ENCODE measurements at regions of chr20 and their contacts with region 1.

Region 1: GRCh38 chr20:17682103-17682888 is at the start of gene RRBP1:
- DNase-seq: peak; percentile 97
- ATAC-seq: peak; percentile 96
- H3K4me3 Mint-ChIP-seq: peak within 1 kb of the TSS; percentile 78
- H3K27ac Mint-ChIP-seq: peak within 1 kb of the TSS; percentile 82
- H3K4me1 Mint-ChIP-seq: peaks cover 26% of the 10 kb centered on the region
- H3K27me3 Mint-ChIP-seq: peaks cover 27% of the 10 kb centered on the region
- CTCF ChIP-seq: peak; percentile 94
- total RNA-seq, gene RRBP1: 35.2 to 35.9 TPM

Region 2: DNA sequence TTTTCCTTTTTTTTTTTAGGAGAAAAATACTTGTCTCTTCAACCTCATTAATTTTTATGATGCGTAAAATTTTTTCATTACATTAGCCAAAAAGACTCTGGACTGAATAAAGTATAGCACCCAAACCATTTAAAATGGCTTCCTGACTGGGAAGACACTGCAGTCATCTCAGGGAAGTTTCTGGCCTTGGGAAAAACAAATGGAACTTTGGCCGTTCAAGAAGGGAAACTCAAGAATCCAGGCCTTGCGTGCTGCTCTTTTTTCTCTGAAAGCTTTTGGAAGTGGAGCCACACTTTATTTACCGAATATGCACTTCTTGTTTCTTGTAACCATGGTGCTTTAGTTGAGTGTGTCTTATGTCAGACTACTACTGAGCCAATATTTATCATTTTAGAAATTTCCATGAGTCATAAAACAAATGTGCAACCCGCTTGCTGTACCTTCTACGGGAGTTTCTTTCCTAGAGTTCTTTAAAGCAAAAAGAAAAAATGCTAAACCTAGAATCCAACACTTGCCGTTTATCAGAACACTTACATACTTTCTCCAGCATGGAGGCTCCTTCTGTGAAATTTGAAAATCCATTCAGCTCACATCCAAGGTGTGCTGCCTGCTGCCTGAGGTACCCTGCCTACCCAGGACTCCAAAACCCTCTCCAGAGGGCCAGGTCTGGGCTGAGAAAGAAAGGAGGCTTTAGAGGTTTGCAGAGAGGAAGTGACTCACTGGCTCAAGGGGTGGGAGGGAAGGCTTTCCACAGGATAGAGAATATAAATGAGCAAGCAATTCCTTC is 123.9 kb before region 1 on chr20:
- CTCF ChIA-PET with region 1: no interaction called
- POLR2A ChIA-PET with region 1: no interaction called
- intact Hi-C with region 1: no loop called
- DNase-seq: peak; percentile 39
- ATAC-seq: peak; percentile 79
- H3K4me3 Mint-ChIP-seq: no peak overlapping the region
- H3K27ac Mint-ChIP-seq: peak overlapping the region; percentile 79
- H3K4me1 Mint-ChIP-seq: peaks cover 33% of the 10 kb centered on the region
- H3K27me3 Mint-ChIP-seq: no peaks in the 10 kb centered on the region
- CTCF ChIP-seq: no peak

Region 3: DNA sequence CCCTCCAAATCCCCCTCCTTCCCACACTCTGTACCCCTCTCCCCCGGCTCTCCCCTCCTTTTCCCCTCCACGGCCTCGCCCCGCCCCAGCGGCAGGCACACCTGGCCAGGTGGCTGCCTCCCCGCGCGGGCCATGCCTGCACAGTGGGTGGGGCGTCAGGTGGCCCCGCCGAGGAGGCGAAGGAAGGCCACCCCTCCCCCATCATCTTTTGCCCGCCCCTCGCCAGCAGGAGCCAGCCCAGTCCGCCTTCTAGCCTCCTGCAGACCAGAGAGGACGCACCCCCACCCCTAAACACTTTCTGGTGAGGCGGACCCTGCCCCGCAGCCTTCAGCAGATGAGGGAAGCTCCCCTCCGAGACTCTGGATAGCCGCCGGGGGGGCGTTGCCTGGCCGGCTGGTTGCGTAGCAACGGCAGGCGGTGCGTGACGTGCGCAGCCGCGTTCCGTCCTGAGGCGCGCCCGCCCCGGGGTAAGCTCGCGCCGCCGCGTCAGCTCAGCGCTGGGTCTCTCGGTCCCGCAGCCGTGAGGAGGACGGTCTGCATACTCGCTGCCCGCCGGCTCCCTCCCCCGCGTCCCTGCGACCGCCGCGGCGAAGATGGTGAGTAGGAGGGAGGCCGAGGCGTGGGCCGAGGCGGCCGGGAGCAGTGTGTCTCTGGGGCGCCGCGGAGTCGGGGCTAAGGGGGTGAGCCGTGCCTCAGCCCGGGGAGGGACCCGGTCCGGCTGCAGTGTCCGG is 112.5 kb before region 1 on chr20 and contains the start of gene DSTN:
- CTCF ChIA-PET with region 1: interaction called, 14 read pairs
- POLR2A ChIA-PET with region 1: interaction called, 6 read pairs
- intact Hi-C with region 1: no loop called
- DNase-seq: peak; percentile 87
- ATAC-seq: peak; percentile 90
- H3K4me3 Mint-ChIP-seq: peak within 1 kb of the TSS; percentile 83
- H3K27ac Mint-ChIP-seq: peak within 1 kb of the TSS; percentile 81
- H3K4me1 Mint-ChIP-seq: peaks cover 16% of the 10 kb centered on the region
- H3K27me3 Mint-ChIP-seq: peaks cover 2% of the 10 kb centered on the region
- CTCF ChIP-seq: no peak
- total RNA-seq, gene DSTN: 55.5 to 56.4 TPM

Region 4: DNA sequence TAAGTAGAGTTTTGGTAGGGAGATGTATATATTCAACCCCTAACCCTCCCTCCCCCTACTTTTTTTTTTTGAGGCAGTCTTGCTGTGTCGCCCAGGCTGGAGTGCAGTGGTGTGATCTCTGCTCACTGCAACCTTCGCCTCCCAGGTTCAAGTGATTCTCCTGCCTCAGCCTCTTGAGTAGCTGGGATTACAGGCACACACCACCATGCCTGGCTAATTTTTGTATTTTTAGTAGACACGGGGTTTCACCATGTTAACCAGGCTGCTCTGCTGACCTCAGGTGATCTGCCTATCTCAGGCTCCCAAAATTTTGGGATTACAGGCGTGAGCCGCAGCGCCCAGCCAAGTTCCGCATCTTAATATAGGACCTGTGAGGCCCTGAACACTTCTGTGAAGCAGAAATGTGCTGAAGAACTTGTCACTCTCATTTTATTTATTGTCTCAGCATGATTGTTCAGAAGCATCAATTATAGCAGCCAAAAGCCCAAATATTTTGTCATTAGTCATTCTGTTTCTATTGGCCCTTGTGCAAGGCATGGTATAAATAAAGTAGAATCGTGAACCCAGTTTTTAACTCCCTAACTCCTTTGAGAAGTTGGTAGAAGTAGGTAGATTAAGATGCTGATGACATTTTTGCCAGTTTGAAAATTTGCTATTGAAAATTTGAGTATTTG is 93.0 kb before region 1 on chr20:
- CTCF ChIA-PET with region 1: no interaction called
- POLR2A ChIA-PET with region 1: no interaction called
- intact Hi-C with region 1: no loop called
- DNase-seq: no peak
- ATAC-seq: no peak
- H3K4me3 Mint-ChIP-seq: no peak overlapping the region
- H3K27ac Mint-ChIP-seq: no peak overlapping the region
- H3K4me1 Mint-ChIP-seq: peaks cover 19% of the 10 kb centered on the region
- H3K27me3 Mint-ChIP-seq: no peaks in the 10 kb centered on the region
- CTCF ChIP-seq: no peak

Region 5: DNA sequence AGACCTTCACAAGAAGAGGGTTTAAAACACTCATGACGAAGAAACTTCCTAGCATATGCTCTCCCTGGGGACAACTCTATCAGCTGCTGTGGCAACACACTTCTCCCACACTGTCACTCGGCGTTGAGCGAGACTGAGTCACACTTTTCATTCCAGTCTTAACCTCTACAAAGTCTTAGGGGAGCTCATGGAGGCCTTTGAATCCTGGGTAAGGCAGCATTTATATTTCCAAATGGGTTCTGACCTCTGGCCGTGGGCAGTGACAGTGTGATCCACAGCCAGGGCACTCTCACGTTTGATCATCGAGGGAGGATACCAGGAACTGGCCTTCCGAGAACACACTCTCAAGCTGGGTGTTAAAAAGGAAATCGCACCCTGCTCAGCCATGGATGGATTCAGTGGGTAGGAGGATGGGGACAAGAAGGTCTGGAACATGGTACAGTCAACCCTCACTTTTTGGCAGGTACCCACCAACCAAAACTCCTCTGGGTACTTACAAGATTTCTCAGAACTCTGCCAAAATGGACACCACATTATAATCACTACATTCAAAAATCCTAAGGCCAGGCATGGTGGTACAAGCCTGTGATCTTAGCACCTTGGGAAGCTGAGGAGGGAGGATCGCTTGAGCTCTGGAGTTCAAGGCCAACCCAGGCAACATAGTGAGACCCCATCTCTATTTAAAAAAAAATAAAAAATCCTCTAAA is 19.8 kb before region 1 on chr20:
- CTCF ChIA-PET with region 1: interaction called, 65 read pairs
- POLR2A ChIA-PET with region 1: interaction called, 4 read pairs
- intact Hi-C with region 1: no loop called
- DNase-seq: peak; percentile 53
- ATAC-seq: peak; percentile 40
- H3K4me3 Mint-ChIP-seq: no peak overlapping the region
- H3K27ac Mint-ChIP-seq: peak overlapping the region; percentile 73
- H3K4me1 Mint-ChIP-seq: peaks cover 58% of the 10 kb centered on the region
- H3K27me3 Mint-ChIP-seq: no peaks in the 10 kb centered on the region
- CTCF ChIP-seq: no peak

Region 6: DNA sequence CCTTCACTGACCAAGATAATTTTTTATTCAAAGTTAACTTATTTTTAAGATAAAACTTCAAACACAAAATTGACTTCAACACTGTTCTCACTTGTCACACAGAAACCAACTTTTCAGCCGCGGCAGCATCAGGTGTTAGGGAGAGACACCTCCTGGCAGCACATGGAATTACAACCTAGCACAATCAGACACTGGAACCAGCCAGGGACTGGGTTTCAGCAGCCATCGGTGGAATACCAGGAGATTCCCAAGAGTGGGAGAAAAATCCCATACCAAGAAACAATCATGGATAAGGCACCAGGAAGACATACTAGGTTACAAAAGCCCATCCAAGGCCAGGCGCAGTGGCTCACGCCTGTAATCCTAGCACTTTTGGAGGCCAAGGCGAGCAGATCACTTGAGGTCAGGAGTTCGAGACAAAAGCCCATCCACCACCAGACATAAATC is 216.3 kb after region 1 on chr20:
- CTCF ChIA-PET with region 1: interaction called, 49 read pairs
- POLR2A ChIA-PET with region 1: no interaction called
- intact Hi-C with region 1: loop called (anchors 5 kb)
- DNase-seq: peak; percentile 81
- ATAC-seq: peak; percentile 67
- H3K4me3 Mint-ChIP-seq: no peak overlapping the region
- H3K27ac Mint-ChIP-seq: no peak overlapping the region
- H3K4me1 Mint-ChIP-seq: peaks cover 19% of the 10 kb centered on the region
- H3K27me3 Mint-ChIP-seq: peaks cover 21% of the 10 kb centered on the region
- CTCF ChIP-seq: peak; percentile 95

Region 7: GRCh38 chr20:17968366-17969279 is 286.3 kb after region 1 on chr20 and contains the starts of genes MGME1 and SNX5:
- CTCF ChIA-PET with region 1: interaction called, 10 read pairs
- POLR2A ChIA-PET with region 1: interaction called, 4 read pairs
- intact Hi-C with region 1: no loop called
- DNase-seq: peak; percentile 100
- ATAC-seq: peak; percentile 92
- H3K4me3 Mint-ChIP-seq: peak within 1 kb of the TSS; percentile 92
- H3K27ac Mint-ChIP-seq: peak within 1 kb of the TSS; percentile 99
- H3K4me1 Mint-ChIP-seq: peaks cover 37% of the 10 kb centered on the region
- H3K27me3 Mint-ChIP-seq: no peaks in the 10 kb centered on the region
- CTCF ChIP-seq: no peak
- total RNA-seq, gene MGME1: 28.2 to 30.5 TPM
- total RNA-seq, gene SNX5: 222 to 249 TPM